ENCODE measurements at regions of chr2 and their contacts with region 1.

Region 1: GRCh38 chr2:223523551-223524001 is 78.6 kb downstream of the SCG2 start:
- DNase-seq: no peak

Region 2: GRCh38 chr2:223488814-223489213 is 34.8 kb before region 1 on chr2:
- intact Hi-C with region 1: loop called in 1 of 2 experiments (anchors 1 kb)
- DNase-seq: no peak

Measured in posterior vena cava (tissue), 2 donors.